Naive thymus-derived CD4-positive, alpha-beta T cell (primary cell): ENCODE measurements at regions of chr11 and their contacts with region 1.

Region 1: GRCh38 chr11:798093-798713 is at the start of gene SLC25A22:
- DNase-seq: peak; percentile 66 to 93 (median 83)
- ATAC-seq: peak; percentile 82
- H3K4me3 ChIP-seq: peak within 1 kb of the TSS; percentile 87
- H3K4me3 Mint-ChIP-seq: peak within 1 kb of the TSS; percentile 84 to 99 (median 90)
- H3K27ac ChIP-seq: peak within 1 kb of the TSS; percentile 93
- H3K27ac Mint-ChIP-seq: peak within 1 kb of the TSS; percentile 61 to 94 (median 92)
- H3K4me1 ChIP-seq: peaks cover 14 to 16% of the 10 kb centered on the region in 2 donors
- H3K4me1 Mint-ChIP-seq: peaks cover 0 to 15% (median 12%) of the 10 kb centered on the region in 7 donors
- H3K27me3 ChIP-seq: no peaks in the 10 kb centered on the region
- H3K27me3 Mint-ChIP-seq: no peaks in the 10 kb centered on the region
- total RNA-seq, gene SLC25A22: 17.4 to 58.4 (median 21.3) TPM

Region 2: DNA sequence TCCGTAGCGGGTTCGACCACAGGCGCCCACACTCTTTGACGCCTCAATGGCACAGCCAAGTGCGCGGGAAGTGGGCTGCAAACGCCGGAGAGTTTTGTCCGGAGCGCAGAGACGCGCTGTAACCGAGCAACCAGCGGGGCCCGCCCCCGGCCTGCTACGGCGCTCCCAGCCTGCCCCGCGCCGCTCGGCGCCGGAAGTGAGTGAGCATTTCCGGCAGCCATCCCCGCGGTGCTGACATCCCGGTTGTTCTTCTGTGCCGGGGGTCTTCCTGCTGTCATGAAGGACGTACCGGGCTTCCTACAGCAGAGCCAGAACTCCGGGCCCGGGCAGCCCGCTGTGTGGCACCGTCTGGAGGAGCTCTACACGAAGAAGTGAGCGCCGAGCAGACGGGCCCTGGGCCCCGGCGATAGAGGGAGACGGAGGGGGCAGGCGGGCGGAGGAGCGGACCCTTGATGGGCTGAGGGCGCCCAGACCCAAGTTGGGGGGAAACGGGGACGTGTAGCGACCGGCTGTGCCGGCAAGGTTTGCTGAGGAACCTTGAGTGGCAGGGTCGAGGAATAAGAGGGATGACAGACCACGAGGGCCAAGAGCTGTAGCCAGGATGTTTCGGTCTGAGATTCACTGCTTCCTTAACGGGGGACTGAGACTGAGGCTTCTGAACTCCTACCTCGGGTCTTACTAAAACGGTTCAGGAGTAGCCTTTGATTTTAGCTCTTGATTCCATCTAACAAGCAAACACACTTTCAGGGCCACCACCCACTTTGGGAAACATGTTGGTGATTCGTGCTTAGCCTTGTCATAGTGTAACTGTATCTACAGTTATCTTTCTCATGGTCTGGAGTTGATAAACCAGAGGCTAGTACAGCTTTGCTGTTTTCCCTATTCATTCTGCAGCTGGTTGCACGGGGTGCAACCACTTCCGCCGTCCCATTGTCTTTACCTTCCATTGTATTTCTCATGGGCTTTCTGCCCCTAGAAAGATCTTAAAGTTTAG is 561.1 kb before region 1 on chr11 and contains the start of gene PSMD13:
- CTCF ChIA-PET with region 1: no interaction called
- POLR2A ChIA-PET with region 1: no interaction called
- intact Hi-C with region 1: loop called in 1 of 2 experiments (anchors 5 kb)
- DNase-seq: peak; percentile 82 to 92 (median 88)
- ATAC-seq: peak; percentile 88
- H3K4me3 ChIP-seq: peak within 1 kb of the TSS; percentile 100
- H3K4me3 Mint-ChIP-seq: peak within 1 kb of the TSS; percentile 84 to 99 (median 96)
- H3K27ac ChIP-seq: peak within 1 kb of the TSS; percentile 97
- H3K27ac Mint-ChIP-seq: peak within 1 kb of the TSS; percentile 84 to 100 (median 100)
- H3K4me1 ChIP-seq: peaks cover 17 to 23% of the 10 kb centered on the region in 2 donors
- H3K4me1 Mint-ChIP-seq: peaks cover 26 to 66% (median 53%) of the 10 kb centered on the region in 7 donors
- H3K27me3 ChIP-seq: no peaks in the 10 kb centered on the region
- H3K27me3 Mint-ChIP-seq: no peaks in the 10 kb centered on the region
- total RNA-seq, gene PSMD13: 64.3 to 172 (median 86.9) TPM

Region 3: GRCh38 chr11:535519-536454 is 262.4 kb before region 1 on chr11 and contains the start of gene HRAS:
- CTCF ChIA-PET with region 1: no interaction called
- POLR2A ChIA-PET with region 1: no interaction called
- intact Hi-C with region 1: loop called in 1 of 2 experiments (anchors 2 kb)
- DNase-seq: peak; percentile 92 to 99 (median 96)
- ATAC-seq: peak; percentile 93
- H3K4me3 ChIP-seq: peak within 1 kb of the TSS; percentile 66
- H3K4me3 Mint-ChIP-seq: peak within 1 kb of the TSS; percentile 87 to 97 (median 91)
- H3K27ac ChIP-seq: peak within 1 kb of the TSS; percentile 75
- H3K27ac Mint-ChIP-seq: peak within 1 kb of the TSS; percentile 84 to 96 (median 91)
- H3K4me1 ChIP-seq: peaks cover 20 to 21% of the 10 kb centered on the region in 2 donors
- H3K4me1 Mint-ChIP-seq: peaks cover 5 to 16% (median 11%) of the 10 kb centered on the region in 7 donors
- H3K27me3 ChIP-seq: no peaks in the 10 kb centered on the region
- H3K27me3 Mint-ChIP-seq: no peaks in the 10 kb centered on the region
- total RNA-seq, gene HRAS: 22.3 to 52.0 (median 31.9) TPM

Region 4: DNA sequence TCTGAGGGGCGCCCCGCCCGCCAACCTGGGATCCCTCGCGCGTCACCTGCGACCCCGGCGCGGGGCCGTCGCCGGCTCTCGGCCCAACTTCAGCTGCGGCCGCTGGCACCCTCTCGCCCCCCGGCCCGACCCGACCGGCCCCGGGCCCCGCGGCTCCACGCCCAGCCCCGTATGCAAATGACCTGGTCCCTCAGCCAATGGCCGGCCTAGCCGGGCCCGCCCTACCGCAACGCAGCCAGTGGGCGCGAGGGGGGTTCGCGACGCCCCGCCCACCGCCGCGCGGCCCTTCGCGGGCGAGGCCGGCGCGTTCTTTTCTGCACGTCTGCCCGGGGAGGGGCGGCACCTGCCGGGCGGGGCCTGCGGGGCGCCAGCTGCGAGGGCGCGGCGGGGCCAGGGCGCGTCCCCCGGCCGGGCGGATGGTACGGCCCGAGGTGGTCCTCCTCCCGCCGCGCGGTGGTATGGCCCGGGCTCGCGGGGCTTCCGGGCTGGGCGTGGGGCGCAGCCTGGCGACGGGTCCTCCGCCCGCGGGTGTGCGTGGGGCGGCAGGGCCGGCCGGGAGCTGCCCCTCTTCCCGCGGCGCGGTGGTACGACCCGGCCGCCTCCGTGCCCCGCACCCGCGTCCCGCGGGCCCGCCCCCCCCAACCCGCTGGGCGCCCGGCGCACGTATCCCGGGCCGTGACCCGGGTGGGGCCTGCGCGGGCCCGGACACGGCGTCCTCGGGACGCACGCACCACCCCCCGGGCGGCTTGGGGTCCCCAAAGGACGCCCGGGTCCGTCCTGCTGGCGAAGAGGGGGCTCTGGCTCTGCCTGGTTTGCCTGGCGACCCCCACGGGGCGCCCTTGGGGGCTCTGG is 229.7 kb before region 1 on chr11:
- CTCF ChIA-PET with region 1: no interaction called
- POLR2A ChIA-PET with region 1: interaction called, 3 read pairs
- intact Hi-C with region 1: loop called in 1 of 2 experiments (anchors 10 kb)
- DNase-seq: peak; percentile 87 to 99 (median 95)
- ATAC-seq: peak; percentile 95
- H3K4me3 ChIP-seq: peak overlapping the region; percentile 73
- H3K4me3 Mint-ChIP-seq: peak overlapping the region; percentile 69 to 84 (median 77)
- H3K27ac ChIP-seq: peak overlapping the region; percentile 65
- H3K27ac Mint-ChIP-seq: peak overlapping the region in 3 of 9 donors; percentile 40 to 82 (median 68)
- H3K4me1 ChIP-seq: peaks cover 6 to 8% of the 10 kb centered on the region in 2 donors
- H3K4me1 Mint-ChIP-seq: peaks cover 0 to 16% (median 3%) of the 10 kb centered on the region in 7 donors
- H3K27me3 ChIP-seq: no peaks in the 10 kb centered on the region
- H3K27me3 Mint-ChIP-seq: no peaks in the 10 kb centered on the region

Region 5: DNA sequence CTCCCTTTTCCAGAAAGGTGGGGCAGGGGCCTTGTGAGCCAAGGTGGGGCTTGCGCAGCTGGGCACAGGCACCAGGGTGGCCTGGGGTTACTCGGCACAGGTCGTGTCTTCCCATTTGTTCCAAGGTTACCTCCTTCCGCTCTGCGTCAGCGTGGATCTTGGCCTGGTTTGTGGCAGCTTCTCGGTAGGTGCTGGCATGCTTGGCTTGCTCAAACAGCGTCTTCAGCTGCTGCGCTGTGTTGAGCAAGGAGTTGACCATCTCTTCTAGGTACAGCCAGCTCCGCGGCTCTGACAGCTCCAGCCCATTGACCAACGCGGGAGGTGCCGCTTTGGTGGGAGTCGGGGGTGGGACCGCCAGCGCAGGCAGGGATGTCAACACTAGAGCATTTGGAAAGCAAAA is 123.8 kb before region 1 on chr11:
- CTCF ChIA-PET with region 1: no interaction called
- POLR2A ChIA-PET with region 1: no interaction called
- intact Hi-C with region 1: no loop called
- DNase-seq: no peak
- ATAC-seq: no peak
- H3K4me3 ChIP-seq: no peak overlapping the region
- H3K4me3 Mint-ChIP-seq: no peak overlapping the region
- H3K27ac ChIP-seq: no peak overlapping the region
- H3K27ac Mint-ChIP-seq: no peak overlapping the region
- H3K4me1 ChIP-seq: no peaks in the 10 kb centered on the region
- H3K4me1 Mint-ChIP-seq: peaks cover 0 to 3% (median 0%) of the 10 kb centered on the region in 7 donors
- H3K27me3 ChIP-seq: no peaks in the 10 kb centered on the region
- H3K27me3 Mint-ChIP-seq: no peaks in the 10 kb centered on the region

Region 6: GRCh38 chr11:747158-748006 is 50.8 kb before region 1 on chr11 and contains the start of gene TALDO1:
- CTCF ChIA-PET with region 1: no interaction called
- POLR2A ChIA-PET with region 1: no interaction called
- intact Hi-C with region 1: loop called (anchors 1 kb)
- DNase-seq: peak; percentile 54 to 96 (median 60)
- ATAC-seq: peak; percentile 92
- H3K4me3 ChIP-seq: peak within 1 kb of the TSS; percentile 67
- H3K4me3 Mint-ChIP-seq: peak within 1 kb of the TSS; percentile 80 to 93 (median 88)
- H3K27ac ChIP-seq: peak within 1 kb of the TSS; percentile 80
- H3K27ac Mint-ChIP-seq: peak within 1 kb of the TSS; percentile 73 to 90 (median 83)
- H3K4me1 ChIP-seq: peaks cover 10% of the 10 kb centered on the region in 2 donors
- H3K4me1 Mint-ChIP-seq: peaks cover 5 to 28% (median 19%) of the 10 kb centered on the region in 7 donors
- H3K27me3 ChIP-seq: no peaks in the 10 kb centered on the region
- H3K27me3 Mint-ChIP-seq: no peaks in the 10 kb centered on the region
- total RNA-seq, gene TALDO1: 61.4 to 272 (median 90.3) TPM

Region 7: GRCh38 chr11:764318-765024 is 33.7 kb before region 1 on chr11:
- CTCF ChIA-PET with region 1: no interaction called
- POLR2A ChIA-PET with region 1: no interaction called
- intact Hi-C with region 1: no loop called
- DNase-seq: no peak
- ATAC-seq: no peak
- H3K4me3 ChIP-seq: no peak overlapping the region
- H3K4me3 Mint-ChIP-seq: no peak overlapping the region
- H3K27ac ChIP-seq: no peak overlapping the region
- H3K27ac Mint-ChIP-seq: peak overlapping the region in 1 of 9 donors; percentile 43
- H3K4me1 ChIP-seq: no peaks in the 10 kb centered on the region
- H3K4me1 Mint-ChIP-seq: peaks cover 0 to 8% (median 0%) of the 10 kb centered on the region in 7 donors
- H3K27me3 ChIP-seq: no peaks in the 10 kb centered on the region
- H3K27me3 Mint-ChIP-seq: no peaks in the 10 kb centered on the region

Region 8: GRCh38 chr11:809287-810039 is 11.3 kb after region 1 on chr11 and contains the start of gene RPLP2:
- CTCF ChIA-PET with region 1: no interaction called
- POLR2A ChIA-PET with region 1: interaction called, 14 read pairs
- intact Hi-C with region 1: loop called (anchors 1 kb)
- DNase-seq: peak; percentile 95 to 99 (median 98)
- ATAC-seq: peak; percentile 90
- H3K4me3 ChIP-seq: peak within 1 kb of the TSS; percentile 96
- H3K4me3 Mint-ChIP-seq: peak within 1 kb of the TSS; percentile 88 to 96 (median 95)
- H3K27ac ChIP-seq: peak within 1 kb of the TSS; percentile 96
- H3K27ac Mint-ChIP-seq: peak within 1 kb of the TSS; percentile 91 to 99 (median 97)
- H3K4me1 ChIP-seq: peaks cover 24 to 26% of the 10 kb centered on the region in 2 donors
- H3K4me1 Mint-ChIP-seq: peaks cover 8 to 51% (median 32%) of the 10 kb centered on the region in 7 donors
- H3K27me3 ChIP-seq: no peaks in the 10 kb centered on the region
- H3K27me3 Mint-ChIP-seq: no peaks in the 10 kb centered on the region
- total RNA-seq, gene RPLP2: 2,266 to 5,944 (median 5,497) TPM

Region 9: DNA sequence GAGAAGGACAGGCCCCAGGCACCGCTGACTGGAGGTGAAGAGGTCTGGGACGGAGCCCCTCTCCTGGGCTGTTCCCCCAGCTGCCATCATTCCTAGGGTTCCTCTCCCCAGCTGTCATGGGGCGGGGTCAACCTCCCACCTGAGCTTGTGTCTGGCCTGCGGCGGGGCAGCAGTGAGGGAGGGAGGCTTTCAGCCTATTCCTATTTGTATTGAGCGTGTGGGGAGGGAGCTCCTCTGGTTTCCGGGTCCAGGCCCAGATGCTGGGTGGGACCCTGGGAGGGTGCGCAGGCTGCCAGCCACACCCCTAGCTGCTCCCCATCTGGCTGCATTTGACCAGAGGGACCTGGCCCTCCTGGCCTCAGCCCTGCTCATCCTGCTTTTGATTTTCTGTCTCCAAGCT is 58.2 kb after region 1 on chr11:
- CTCF ChIA-PET with region 1: no interaction called
- POLR2A ChIA-PET with region 1: no interaction called
- intact Hi-C with region 1: no loop called
- DNase-seq: no peak
- ATAC-seq: no peak
- H3K4me3 ChIP-seq: no peak overlapping the region
- H3K4me3 Mint-ChIP-seq: no peak overlapping the region
- H3K27ac ChIP-seq: no peak overlapping the region
- H3K27ac Mint-ChIP-seq: peak overlapping the region in 1 of 9 donors; percentile 46
- H3K4me1 ChIP-seq: no peaks in the 10 kb centered on the region
- H3K4me1 Mint-ChIP-seq: peaks cover 0 to 9% (median 0%) of the 10 kb centered on the region in 7 donors
- H3K27me3 ChIP-seq: no peaks in the 10 kb centered on the region
- H3K27me3 Mint-ChIP-seq: no peaks in the 10 kb centered on the region

Region 10: GRCh38 chr11:925496-926321 is 127.5 kb after region 1 on chr11 and contains the start of gene AP2A2:
- CTCF ChIA-PET with region 1: no interaction called
- POLR2A ChIA-PET with region 1: no interaction called
- intact Hi-C with region 1: loop called in 1 of 2 experiments (anchors 5 kb)
- DNase-seq: peak; percentile 85 to 98 (median 93)
- ATAC-seq: peak; percentile 94
- H3K4me3 ChIP-seq: peak within 1 kb of the TSS; percentile 67
- H3K4me3 Mint-ChIP-seq: peak within 1 kb of the TSS; percentile 77 to 91 (median 86)
- H3K27ac ChIP-seq: peak within 1 kb of the TSS; percentile 74
- H3K27ac Mint-ChIP-seq: peak within 1 kb of the TSS; percentile 20 to 97 (median 89)
- H3K4me1 ChIP-seq: peaks cover 16 to 30% of the 10 kb centered on the region in 2 donors
- H3K4me1 Mint-ChIP-seq: peaks cover 24 to 44% (median 28%) of the 10 kb centered on the region in 7 donors
- H3K27me3 ChIP-seq: no peaks in the 10 kb centered on the region
- H3K27me3 Mint-ChIP-seq: no peaks in the 10 kb centered on the region
- total RNA-seq, gene AP2A2: 70.1 to 93.3 (median 86.4) TPM